ENCODE measurements at regions of chr18 and their contacts with region 1.

Region 1: GRCh38 chr18:74804677-74805076 is 207.0 kb downstream of the ZNF407 start:
- DNase-seq: no peak
- ATAC-seq: no peak

Region 2: GRCh38 chr18:74840492-74841167 is 36.0 kb after region 1 on chr18:
- intact Hi-C with region 1: loop called (anchors 5 kb)
- DNase-seq: no peak
- ATAC-seq: no peak

Region 3: GRCh38 chr18:74862094-74862493 is 57.4 kb after region 1 on chr18:
- intact Hi-C with region 1: loop called (anchors 2 kb)
- DNase-seq: no peak
- ATAC-seq: peak; percentile 95